ENCODE measurements at regions of chr18 and their contacts with region 1.

Region 1: DNA sequence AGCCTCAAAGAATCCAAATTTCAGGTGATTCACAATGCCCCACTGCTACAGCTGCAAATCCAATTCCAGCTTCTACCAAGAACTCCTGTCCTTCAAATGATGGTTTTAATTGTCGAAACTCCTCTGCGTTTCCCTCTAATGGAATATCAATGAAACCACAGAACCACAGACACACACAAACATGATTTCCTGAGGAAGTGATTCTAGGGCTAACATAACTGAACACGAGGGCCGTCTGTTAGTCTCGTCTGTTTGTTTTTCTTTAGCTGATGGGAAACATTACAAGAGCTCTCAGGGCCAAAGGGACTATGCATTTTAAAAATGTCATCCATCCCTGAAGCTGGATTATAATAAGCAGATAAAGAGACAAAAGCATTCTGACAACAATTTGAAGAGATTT is 59.4 kb downstream of the RNF152 start:
- DNase-seq: peak; percentile 93
- H3K4me3 ChIP-seq: peak overlapping the region in 1 of 3 experiments; percentile 31
- H3K27ac ChIP-seq: peak overlapping the region; percentile 75
- H3K4me1 ChIP-seq: peaks cover 43% of the 10 kb centered on the region
- H3K27me3 ChIP-seq: no peaks in the 10 kb centered on the region
- CTCF ChIP-seq: no peak
- POLR2A ChIP-seq: no peak

Region 2: DNA sequence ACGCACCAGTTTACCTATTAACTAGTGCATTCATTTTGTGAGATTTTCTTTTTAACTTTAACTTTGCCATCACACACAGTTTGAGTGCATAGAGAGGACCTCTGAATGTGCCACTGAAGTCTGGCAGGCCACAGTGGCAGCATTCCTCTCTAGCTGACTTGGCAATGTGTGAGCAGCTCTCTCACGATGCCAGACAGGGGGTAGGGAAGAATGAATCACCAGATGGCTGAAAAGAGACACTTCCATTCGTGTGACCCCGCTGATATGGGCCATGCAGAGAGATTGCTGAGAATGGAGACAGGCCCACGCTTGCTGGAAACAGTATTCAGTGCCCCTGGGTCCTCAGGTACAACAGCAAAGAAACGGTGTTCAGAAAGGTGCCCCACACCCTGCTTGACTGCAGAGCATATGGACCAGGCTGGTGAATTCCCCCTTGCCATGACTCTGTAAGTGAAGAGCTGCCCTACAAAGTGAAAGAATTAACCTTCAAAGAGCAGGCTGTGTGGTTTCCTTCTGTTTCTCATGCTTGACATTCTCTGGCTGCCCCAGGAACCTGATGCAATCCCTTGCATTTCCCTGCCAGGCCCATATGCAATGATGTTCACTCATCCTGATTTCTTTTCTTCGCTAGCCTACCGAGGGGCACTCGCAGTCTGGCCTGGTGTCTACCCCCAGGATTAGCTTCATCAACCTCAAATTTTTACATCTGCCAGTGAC is 264.1 kb before region 1 on chr18:
- CTCF ChIA-PET with region 1: no interaction called
- POLR2A ChIA-PET with region 1: no interaction called
- dilution Hi-C with region 1: no loop called
- intact Hi-C with region 1: no loop called
- DNase-seq: peak; percentile 59
- H3K4me3 ChIP-seq: no peak overlapping the region
- H3K27ac ChIP-seq: no peak overlapping the region
- H3K4me1 ChIP-seq: peaks cover 10% of the 10 kb centered on the region
- H3K27me3 ChIP-seq: no peaks in the 10 kb centered on the region
- CTCF ChIP-seq: no peak
- POLR2A ChIP-seq: no peak

Region 3: GRCh38 chr18:61581578-61582201 is 251.7 kb before region 1 on chr18:
- CTCF ChIA-PET with region 1: interaction called, 6 read pairs
- POLR2A ChIA-PET with region 1: no interaction called
- dilution Hi-C with region 1: no loop called
- intact Hi-C with region 1: loop called (anchors 2 kb)
- DNase-seq: peak; percentile 77
- H3K4me3 ChIP-seq: peak overlapping the region; percentile 40 to 56 (median 54)
- H3K27ac ChIP-seq: peak overlapping the region; percentile 25
- H3K4me1 ChIP-seq: peaks cover 18% of the 10 kb centered on the region
- H3K27me3 ChIP-seq: no peaks in the 10 kb centered on the region
- CTCF ChIP-seq: peak; percentile 97
- POLR2A ChIP-seq: no peak

Region 4: DNA sequence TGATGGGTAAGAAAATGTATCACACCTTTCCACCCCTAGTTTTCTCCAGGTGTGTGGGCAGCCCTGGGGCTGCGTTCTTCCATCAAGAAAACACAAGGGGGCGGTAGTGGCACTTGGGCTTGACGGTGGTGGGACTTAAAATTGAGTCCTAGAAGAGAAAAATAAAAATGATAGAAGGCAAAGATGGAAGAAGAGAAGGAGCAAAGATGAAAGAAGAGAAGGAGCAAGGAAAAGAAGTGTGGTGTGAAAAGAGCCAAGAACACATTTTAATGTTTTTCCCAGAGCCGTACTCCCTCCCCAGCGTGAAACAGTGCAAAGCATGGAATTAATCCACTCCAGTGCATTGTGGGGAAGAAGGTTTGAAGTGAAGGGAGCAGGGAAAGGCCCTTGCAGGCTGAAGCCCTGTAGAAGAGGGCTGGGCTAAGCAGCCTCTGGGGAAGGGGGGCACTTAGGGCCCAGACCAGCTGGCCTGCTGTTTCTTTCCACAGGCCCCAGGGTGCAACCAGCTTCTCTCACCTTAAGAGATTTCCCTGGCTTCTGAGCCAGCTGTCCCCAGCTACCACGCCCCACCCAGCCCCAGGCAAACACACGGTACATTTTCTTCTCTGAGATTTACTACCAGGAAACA is 197.4 kb before region 1 on chr18:
- CTCF ChIA-PET with region 1: interaction called, 11 read pairs
- POLR2A ChIA-PET with region 1: no interaction called
- dilution Hi-C with region 1: no loop called
- intact Hi-C with region 1: loop called (anchors 1 kb)
- DNase-seq: peak; percentile 76
- H3K4me3 ChIP-seq: no peak overlapping the region
- H3K27ac ChIP-seq: no peak overlapping the region
- H3K4me1 ChIP-seq: peaks cover 4% of the 10 kb centered on the region
- H3K27me3 ChIP-seq: no peaks in the 10 kb centered on the region
- CTCF ChIP-seq: peak; percentile 82 to 88
- POLR2A ChIP-seq: no peak

Region 5: GRCh38 chr18:61702007-61702406 is 131.4 kb before region 1 on chr18:
- CTCF ChIA-PET with region 1: no interaction called
- POLR2A ChIA-PET with region 1: no interaction called
- dilution Hi-C with region 1: no loop called
- intact Hi-C with region 1: loop called (anchors 1 kb)
- DNase-seq: peak; percentile 85
- H3K4me3 ChIP-seq: no peak overlapping the region
- H3K27ac ChIP-seq: peak overlapping the region; percentile 78
- H3K4me1 ChIP-seq: peaks cover 24% of the 10 kb centered on the region
- H3K27me3 ChIP-seq: no peaks in the 10 kb centered on the region
- CTCF ChIP-seq: no peak
- POLR2A ChIP-seq: no peak

Region 6: DNA sequence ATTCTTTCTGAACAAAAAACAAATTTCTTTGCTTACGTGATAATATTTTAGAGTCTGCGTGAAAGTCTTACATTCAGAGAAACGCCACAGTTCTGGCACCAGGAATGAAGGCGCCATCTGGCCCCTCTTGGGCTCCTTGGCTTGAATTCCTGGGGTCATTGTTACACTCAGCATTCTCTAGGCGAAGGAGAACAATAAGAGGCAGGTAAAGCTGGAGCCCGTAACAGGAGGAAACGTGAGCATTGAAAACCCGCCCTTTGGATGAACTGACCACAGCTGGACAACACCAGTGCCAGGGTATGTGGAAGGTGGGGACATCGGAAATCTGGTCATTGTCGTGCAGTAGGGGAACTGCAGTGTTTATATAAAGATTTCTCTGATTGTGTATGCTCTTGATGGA is 85.4 kb before region 1 on chr18:
- CTCF ChIA-PET with region 1: interaction called, 4 read pairs
- POLR2A ChIA-PET with region 1: interaction called, 3 read pairs
- dilution Hi-C with region 1: no loop called
- intact Hi-C with region 1: loop called (anchors 1 kb)
- DNase-seq: peak; percentile 88
- H3K4me3 ChIP-seq: no peak overlapping the region
- H3K27ac ChIP-seq: peak overlapping the region; percentile 88
- H3K4me1 ChIP-seq: peaks cover 23% of the 10 kb centered on the region
- H3K27me3 ChIP-seq: no peaks in the 10 kb centered on the region
- CTCF ChIP-seq: no peak
- POLR2A ChIP-seq: peak; percentile 45

Region 7: DNA sequence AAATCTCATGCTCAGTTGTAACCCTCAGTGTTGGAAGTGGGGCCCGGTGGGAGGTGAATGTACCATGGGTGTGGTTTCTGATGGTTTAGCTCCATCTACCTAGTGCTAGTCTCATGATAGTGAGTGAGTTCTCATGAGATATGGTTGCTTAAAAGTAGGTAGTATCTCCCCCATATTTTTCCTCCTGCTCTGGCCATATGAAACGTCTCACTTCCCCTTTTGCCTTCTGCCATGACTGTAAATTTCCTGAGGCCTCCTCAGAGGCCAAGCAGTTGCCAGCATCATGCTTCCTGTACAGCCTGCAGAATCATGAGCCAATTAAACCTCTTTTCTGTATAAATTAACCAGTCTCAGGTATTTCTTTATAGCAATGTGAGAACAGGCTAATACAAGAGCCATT is 122.3 kb after region 1 on chr18:
- CTCF ChIA-PET with region 1: no interaction called
- POLR2A ChIA-PET with region 1: no interaction called
- dilution Hi-C with region 1: no loop called
- intact Hi-C with region 1: loop called (anchors 10 kb)
- DNase-seq: peak; percentile 56
- H3K4me3 ChIP-seq: no peak overlapping the region
- H3K27ac ChIP-seq: no peak overlapping the region
- H3K4me1 ChIP-seq: peaks cover 16% of the 10 kb centered on the region
- H3K27me3 ChIP-seq: no peaks in the 10 kb centered on the region
- CTCF ChIP-seq: no peak
- POLR2A ChIP-seq: no peak

Region 8: GRCh38 chr18:62001396-62001795 is 168.0 kb after region 1 on chr18:
- CTCF ChIA-PET with region 1: no interaction called
- POLR2A ChIA-PET with region 1: no interaction called
- dilution Hi-C with region 1: no loop called
- intact Hi-C with region 1: no loop called
- DNase-seq: no peak
- H3K4me3 ChIP-seq: no peak overlapping the region
- H3K27ac ChIP-seq: no peak overlapping the region
- H3K4me1 ChIP-seq: peaks cover 31% of the 10 kb centered on the region
- H3K27me3 ChIP-seq: no peaks in the 10 kb centered on the region
- CTCF ChIP-seq: no peak
- POLR2A ChIP-seq: no peak